ENCODE measurements at regions of chr11 and their contacts with region 1.

Region 1: DNA sequence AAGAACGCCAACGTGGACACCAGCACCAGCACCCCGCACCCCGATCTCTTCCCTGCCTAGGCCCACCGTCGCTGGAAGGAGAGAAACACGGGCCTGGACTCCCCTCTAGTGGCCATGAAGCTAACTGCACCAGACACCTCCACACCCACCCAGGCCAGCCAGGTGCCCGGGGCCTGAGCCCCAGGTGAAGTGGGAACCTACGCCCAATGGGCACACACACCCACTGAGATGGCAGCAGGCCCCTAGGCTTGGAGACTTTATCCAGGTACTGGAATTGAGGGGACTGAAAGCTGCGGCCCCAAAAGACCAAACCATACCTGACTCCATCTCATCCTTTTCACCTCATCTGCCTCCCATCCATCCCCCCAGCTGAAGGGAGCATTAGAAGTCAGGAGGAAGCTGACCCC is 81.0 kb downstream of the BUD13 start:
- DNase-seq: peak; percentile 24
- H3K4me3 ChIP-seq: no peak overlapping the region
- H3K27ac ChIP-seq: no peak overlapping the region
- H3K4me1 ChIP-seq: no peaks in the 10 kb centered on the region
- H3K27me3 ChIP-seq: no peaks in the 10 kb centered on the region
- CTCF ChIP-seq: peak; percentile 75 to 91
- POLR2A ChIP-seq: no peak

Region 2: DNA sequence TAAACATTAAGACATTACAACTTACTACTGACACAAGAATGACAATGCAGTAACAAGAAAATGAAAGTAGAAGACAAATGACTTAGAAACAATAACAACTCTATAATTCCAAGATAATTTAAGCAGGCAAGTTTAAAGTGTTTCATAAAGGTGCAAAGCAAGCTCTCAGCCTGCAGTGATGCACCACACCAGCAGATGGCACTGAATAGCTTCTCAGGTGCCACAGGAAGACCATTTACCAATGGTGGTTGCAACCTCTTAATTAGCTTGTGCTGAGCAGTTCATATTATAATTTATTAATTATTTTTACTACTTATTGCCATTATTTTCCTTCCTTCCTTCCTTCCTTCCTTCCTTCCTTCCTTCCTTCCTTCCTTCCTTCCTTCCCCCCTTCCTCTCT is 1952.8 kb before region 1 on chr11:
- CTCF ChIA-PET with region 1: interaction called, 14 read pairs
- POLR2A ChIA-PET with region 1: no interaction called
- dilution Hi-C with region 1: no loop called
- intact Hi-C with region 1: no loop called
- DNase-seq: peak; percentile 50
- H3K4me3 ChIP-seq: no peak overlapping the region
- H3K27ac ChIP-seq: no peak overlapping the region
- H3K4me1 ChIP-seq: no peaks in the 10 kb centered on the region
- H3K27me3 ChIP-seq: peaks cover 0 to 2% of the 10 kb centered on the region in 2 experiments
- CTCF ChIP-seq: peak; percentile 57 to 78
- POLR2A ChIP-seq: no peak

Region 3: DNA sequence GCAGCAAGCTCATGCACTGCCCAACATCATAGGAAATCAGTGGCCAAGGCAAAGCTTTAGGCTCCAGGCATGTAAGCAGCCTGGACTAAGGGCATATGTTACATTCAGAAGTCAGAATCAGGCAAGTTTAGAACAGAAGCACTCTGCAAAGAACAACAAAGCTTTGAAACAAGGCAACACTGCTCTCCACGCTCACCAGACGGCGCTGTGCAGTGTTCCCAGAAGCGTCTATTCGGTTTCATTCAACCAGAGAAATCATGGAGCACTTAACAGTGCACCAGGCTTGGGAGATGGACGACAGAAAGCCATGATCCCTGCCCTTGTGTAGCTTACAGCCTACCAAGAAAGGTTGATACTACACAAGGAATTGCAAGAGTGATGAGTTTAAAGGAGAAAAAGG is 474.8 kb before region 1 on chr11:
- CTCF ChIA-PET with region 1: interaction called, 57 read pairs
- POLR2A ChIA-PET with region 1: no interaction called
- dilution Hi-C with region 1: no loop called
- intact Hi-C with region 1: loop called (anchors 1 kb)
- DNase-seq: peak; percentile 57
- H3K4me3 ChIP-seq: no peak overlapping the region
- H3K27ac ChIP-seq: no peak overlapping the region
- H3K4me1 ChIP-seq: no peaks in the 10 kb centered on the region
- H3K27me3 ChIP-seq: no peaks in the 10 kb centered on the region
- CTCF ChIP-seq: peak; percentile 86 to 89
- POLR2A ChIP-seq: no peak

Region 4: DNA sequence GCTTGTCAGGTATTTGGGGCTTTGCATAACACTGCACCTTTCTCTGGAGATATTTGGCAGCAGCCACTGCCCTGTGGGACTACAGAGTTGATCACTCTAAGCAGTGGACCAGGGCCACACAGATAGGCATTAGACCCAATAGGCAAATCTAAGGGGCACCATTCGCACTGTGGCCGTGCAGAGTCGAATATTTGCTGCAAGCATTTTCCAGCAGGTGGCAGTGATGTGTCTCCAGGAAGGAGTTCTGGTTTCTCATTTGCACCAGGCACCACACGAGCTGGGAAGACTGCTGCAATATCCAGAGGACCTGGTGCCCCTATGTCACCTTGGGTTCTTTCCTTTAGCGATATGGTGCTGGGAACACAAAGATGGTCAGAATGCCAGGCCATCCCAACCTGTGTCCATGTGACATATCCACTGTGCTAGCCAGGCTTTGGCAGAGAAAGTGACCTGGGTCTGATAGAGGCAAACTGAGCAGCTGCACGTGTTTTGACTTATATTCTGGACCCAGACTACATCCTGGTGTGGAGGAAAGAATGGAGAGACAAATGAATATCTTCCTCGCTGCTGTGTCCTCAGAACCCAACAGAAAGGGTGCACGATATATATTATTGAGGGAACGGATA is 237.6 kb before region 1 on chr11:
- CTCF ChIA-PET with region 1: interaction called, 15 read pairs
- POLR2A ChIA-PET with region 1: no interaction called
- dilution Hi-C with region 1: no loop called
- intact Hi-C with region 1: loop called (anchors 1 kb)
- DNase-seq: peak; percentile 65
- H3K4me3 ChIP-seq: no peak overlapping the region
- H3K27ac ChIP-seq: no peak overlapping the region
- H3K4me1 ChIP-seq: no peaks in the 10 kb centered on the region
- H3K27me3 ChIP-seq: no peaks in the 10 kb centered on the region
- CTCF ChIP-seq: peak; percentile 53 to 80
- POLR2A ChIP-seq: no peak

Region 5: GRCh38 chr11:116641561-116642045 is 50.2 kb before region 1 on chr11:
- CTCF ChIA-PET with region 1: interaction called, 10 read pairs
- POLR2A ChIA-PET with region 1: no interaction called
- dilution Hi-C with region 1: no loop called
- intact Hi-C with region 1: no loop called
- DNase-seq: peak; percentile 29
- H3K4me3 ChIP-seq: no peak overlapping the region
- H3K27ac ChIP-seq: no peak overlapping the region
- H3K4me1 ChIP-seq: no peaks in the 10 kb centered on the region
- H3K27me3 ChIP-seq: no peaks in the 10 kb centered on the region
- CTCF ChIP-seq: peak; percentile 73 to 86
- POLR2A ChIP-seq: no peak

Region 6: DNA sequence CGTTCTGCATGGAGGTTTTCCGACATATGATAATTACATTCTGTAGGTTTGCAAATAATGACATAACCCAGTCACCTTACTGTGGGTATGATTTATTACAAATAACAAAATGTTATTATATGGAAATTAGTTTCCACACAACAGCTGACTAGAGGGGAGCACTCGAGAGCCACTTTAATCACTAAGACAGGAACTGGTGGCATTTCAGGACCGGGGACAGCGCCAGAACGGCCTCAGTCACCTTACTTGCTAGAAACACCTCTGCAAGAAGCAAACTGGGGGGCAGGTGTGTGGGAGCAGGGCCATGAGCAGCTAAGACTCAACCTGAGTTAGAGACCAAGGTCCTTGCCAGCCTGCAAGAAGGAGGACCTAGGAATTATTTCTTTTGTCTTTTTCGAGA is 905.3 kb after region 1 on chr11:
- CTCF ChIA-PET with region 1: no interaction called
- POLR2A ChIA-PET with region 1: no interaction called
- dilution Hi-C with region 1: no loop called
- intact Hi-C with region 1: no loop called
- DNase-seq: peak; percentile 38
- H3K4me3 ChIP-seq: no peak overlapping the region
- H3K27ac ChIP-seq: no peak overlapping the region
- H3K4me1 ChIP-seq: no peaks in the 10 kb centered on the region
- H3K27me3 ChIP-seq: peaks cover 0 to 2% of the 10 kb centered on the region in 2 experiments
- CTCF ChIP-seq: no peak
- POLR2A ChIP-seq: no peak

Measured in endothelial cell of umbilical vein (primary cell).